CD14-positive monocyte (primary cell): ENCODE measurements at regions of chr12 and their contacts with region 1.

Region 1: GRCh38 chr12:33926095-33926494 is 96.2 kb upstream of the ALG10 start:
- DNase-seq: no peak
- H3K4me3 ChIP-seq: no peak overlapping the region
- H3K4me3 Mint-ChIP-seq: no peak overlapping the region
- H3K27ac ChIP-seq: no peak overlapping the region
- H3K27ac Mint-ChIP-seq: no peak overlapping the region
- H3K4me1 ChIP-seq: no peaks in the 10 kb centered on the region
- H3K4me1 Mint-ChIP-seq: no peaks in the 10 kb centered on the region
- H3K27me3 ChIP-seq: no peaks in the 10 kb centered on the region
- H3K27me3 Mint-ChIP-seq: no peaks in the 10 kb centered on the region
- CTCF ChIP-seq: no peak

Region 2: GRCh38 chr12:33942172-33942571 is 16.1 kb after region 1 on chr12:
- intact Hi-C with region 1: loop called in 1 of 2 experiments (anchors 2 kb)
- DNase-seq: no peak
- H3K4me3 ChIP-seq: no peak overlapping the region
- H3K4me3 Mint-ChIP-seq: no peak overlapping the region
- H3K27ac ChIP-seq: no peak overlapping the region
- H3K27ac Mint-ChIP-seq: no peak overlapping the region
- H3K4me1 ChIP-seq: no peaks in the 10 kb centered on the region
- H3K4me1 Mint-ChIP-seq: no peaks in the 10 kb centered on the region
- H3K27me3 ChIP-seq: no peaks in the 10 kb centered on the region
- H3K27me3 Mint-ChIP-seq: no peaks in the 10 kb centered on the region
- CTCF ChIP-seq: no peak

Region 3: DNA sequence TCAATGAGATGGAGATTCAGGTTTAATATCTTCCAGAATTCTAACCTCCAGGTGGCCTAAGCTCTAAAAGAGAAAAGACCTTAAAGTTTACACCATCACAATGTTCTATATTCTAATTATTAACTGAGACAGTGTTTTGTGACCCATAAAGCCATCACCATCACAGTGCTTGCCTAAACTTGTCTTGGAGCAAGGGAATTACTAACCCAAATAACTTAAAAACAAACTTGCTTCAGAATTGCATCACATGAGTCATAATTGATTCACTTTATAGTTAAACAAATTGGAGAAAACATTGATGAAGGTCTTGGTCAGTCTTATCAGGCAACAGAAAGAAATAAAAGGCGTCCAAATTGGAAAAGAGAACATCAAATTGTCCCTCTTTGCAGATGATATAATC is 41.7 kb after region 1 on chr12:
- intact Hi-C with region 1: no loop called
- DNase-seq: no peak
- H3K4me3 ChIP-seq: no peak overlapping the region
- H3K4me3 Mint-ChIP-seq: no peak overlapping the region
- H3K27ac ChIP-seq: no peak overlapping the region
- H3K27ac Mint-ChIP-seq: no peak overlapping the region
- H3K4me1 ChIP-seq: no peaks in the 10 kb centered on the region
- H3K4me1 Mint-ChIP-seq: no peaks in the 10 kb centered on the region
- H3K27me3 ChIP-seq: no peaks in the 10 kb centered on the region
- H3K27me3 Mint-ChIP-seq: no peaks in the 10 kb centered on the region
- CTCF ChIP-seq: no peak

Region 4: DNA sequence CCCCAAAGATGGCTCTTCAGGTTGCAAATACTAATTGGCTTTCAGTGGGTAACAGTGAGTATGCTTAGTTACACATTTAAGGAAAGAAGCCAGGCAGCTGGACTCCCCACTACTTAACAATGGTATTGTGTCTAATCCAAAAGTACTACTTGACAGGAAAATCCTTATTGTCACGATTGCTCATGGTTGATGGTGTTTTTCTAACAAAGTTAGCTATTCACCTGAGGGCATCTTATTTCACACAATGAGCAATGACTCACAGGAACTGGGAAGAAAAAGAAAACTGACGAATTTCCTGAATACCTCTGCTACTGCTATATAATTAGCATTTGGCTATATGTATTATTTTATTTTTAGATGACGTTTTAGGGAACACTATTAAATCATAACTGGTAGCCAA is 62.8 kb after region 1 on chr12:
- intact Hi-C with region 1: no loop called
- DNase-seq: no peak
- H3K4me3 ChIP-seq: no peak overlapping the region
- H3K4me3 Mint-ChIP-seq: no peak overlapping the region
- H3K27ac ChIP-seq: no peak overlapping the region
- H3K27ac Mint-ChIP-seq: no peak overlapping the region
- H3K4me1 ChIP-seq: no peaks in the 10 kb centered on the region
- H3K4me1 Mint-ChIP-seq: no peaks in the 10 kb centered on the region
- H3K27me3 ChIP-seq: no peaks in the 10 kb centered on the region
- H3K27me3 Mint-ChIP-seq: no peaks in the 10 kb centered on the region
- CTCF ChIP-seq: no peak

Region 5: DNA sequence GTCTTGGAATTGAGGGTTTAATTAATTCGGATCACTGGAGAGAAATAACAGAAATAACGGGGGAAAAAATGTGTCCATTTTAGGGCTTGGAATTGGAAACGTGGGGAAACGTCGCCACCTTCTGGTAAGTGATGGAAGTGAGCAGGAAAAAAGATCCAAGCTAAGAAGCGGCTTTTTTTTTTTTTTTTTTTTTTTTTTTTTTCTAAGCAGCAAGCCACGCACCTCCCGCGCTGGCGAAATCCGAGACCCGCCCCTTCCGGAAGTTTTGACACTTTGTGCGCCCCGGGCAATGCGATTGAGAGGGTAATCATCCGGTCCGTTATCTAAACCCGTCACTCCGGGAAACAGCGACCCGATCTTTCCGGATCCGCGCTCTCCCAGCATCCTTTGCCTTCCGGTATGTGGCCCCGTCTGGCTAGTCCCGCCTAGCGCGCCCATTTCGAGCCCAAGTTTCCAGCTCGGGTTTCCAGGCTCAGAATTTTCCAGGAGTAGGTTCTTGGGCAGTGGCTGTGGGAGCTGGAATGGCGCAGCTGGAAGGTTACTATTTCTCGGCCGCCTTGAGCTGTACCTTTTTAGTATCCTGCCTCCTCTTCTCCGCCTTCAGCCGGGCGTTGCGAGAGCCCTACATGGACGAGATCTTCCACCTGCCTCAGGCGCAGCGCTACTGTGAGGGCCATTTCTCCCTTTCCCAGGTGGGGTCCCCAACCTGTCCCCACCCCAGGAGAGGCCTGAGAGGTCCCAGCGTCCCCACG is 96.2 kb after region 1 on chr12 and contains the start of gene ALG10:
- intact Hi-C with region 1: no loop called
- DNase-seq: peak; percentile 96 to 97 (median 96)
- H3K4me3 ChIP-seq: peak within 1 kb of the TSS; percentile 53 to 86 (median 67)
- H3K4me3 Mint-ChIP-seq: peak within 1 kb of the TSS; percentile 91 to 97
- H3K27ac ChIP-seq: peak within 1 kb of the TSS; percentile 75 to 88
- H3K27ac Mint-ChIP-seq: peak within 1 kb of the TSS; percentile 92 to 96 (median 95)
- H3K4me1 ChIP-seq: peaks cover 11 to 18% of the 10 kb centered on the region in 2 donors
- H3K4me1 Mint-ChIP-seq: peaks cover 24% of the 10 kb centered on the region
- H3K27me3 ChIP-seq: no peaks in the 10 kb centered on the region
- H3K27me3 Mint-ChIP-seq: peaks cover 0 to 2% (median 0%) of the 10 kb centered on the region in 3 donors
- CTCF ChIP-seq: peak; percentile 78
- polyA plus RNA-seq, gene ALG10: 1.5 to 2.0 (median 1.6) TPM